Colonic mucosa (tissue), 4 donors: ENCODE measurements at regions of chr16 and their contacts with region 1.

Region 1: GRCh38 chr16:87278191-87279095 is 38.7 kb downstream of the C16orf95 start:
- DNase-seq: peak; percentile 77
- H3K4me3 ChIP-seq: no peak overlapping the region
- H3K27ac ChIP-seq: no peak overlapping the region
- H3K4me1 ChIP-seq: no peaks in the 10 kb centered on the region
- H3K27me3 ChIP-seq: no peaks in the 10 kb centered on the region
- CTCF ChIP-seq: peak; percentile 81

Region 2: GRCh38 chr16:87062569-87063442 is 215.6 kb before region 1 on chr16:
- intact Hi-C with region 1: loop called (anchors 10 kb)
- DNase-seq: peak; percentile 61
- H3K4me3 ChIP-seq: no peak overlapping the region
- H3K27ac ChIP-seq: no peak overlapping the region
- H3K4me1 ChIP-seq: no peaks in the 10 kb centered on the region
- H3K27me3 ChIP-seq: no peaks in the 10 kb centered on the region
- CTCF ChIP-seq: peak; percentile 72

Region 3: DNA sequence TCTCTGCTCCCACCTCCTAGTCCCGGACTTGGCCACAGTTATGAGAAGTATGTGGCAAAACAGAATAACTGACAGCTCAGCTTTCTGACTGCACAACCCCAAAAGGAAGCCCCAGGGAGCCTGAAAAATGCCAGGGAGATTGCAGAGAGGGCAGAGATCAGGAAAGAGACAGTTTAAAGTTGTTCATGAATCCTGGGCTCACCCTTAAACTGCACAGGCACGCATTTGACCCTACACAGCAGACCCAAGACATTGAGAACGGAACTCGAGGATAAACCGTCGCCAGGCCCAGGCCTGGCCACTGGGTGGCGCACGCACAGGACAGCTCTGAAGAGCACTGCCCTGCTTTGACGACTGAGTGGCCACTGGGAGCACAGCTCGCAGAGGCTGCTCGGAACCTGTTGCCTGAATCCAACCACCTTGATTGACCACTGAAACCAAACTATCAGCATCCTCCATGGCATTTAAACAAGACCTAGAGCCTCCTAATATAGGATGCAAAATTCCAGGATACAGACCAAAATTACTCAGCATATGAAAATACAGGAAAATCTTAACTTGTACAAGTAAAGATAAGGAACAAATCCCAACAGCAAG is 75.3 kb before region 1 on chr16:
- intact Hi-C with region 1: loop called (anchors 2 kb)
- DNase-seq: peak; percentile 67
- H3K4me3 ChIP-seq: no peak overlapping the region
- H3K27ac ChIP-seq: no peak overlapping the region
- H3K4me1 ChIP-seq: no peaks in the 10 kb centered on the region
- H3K27me3 ChIP-seq: no peaks in the 10 kb centered on the region
- CTCF ChIP-seq: peak; percentile 70

Region 4: DNA sequence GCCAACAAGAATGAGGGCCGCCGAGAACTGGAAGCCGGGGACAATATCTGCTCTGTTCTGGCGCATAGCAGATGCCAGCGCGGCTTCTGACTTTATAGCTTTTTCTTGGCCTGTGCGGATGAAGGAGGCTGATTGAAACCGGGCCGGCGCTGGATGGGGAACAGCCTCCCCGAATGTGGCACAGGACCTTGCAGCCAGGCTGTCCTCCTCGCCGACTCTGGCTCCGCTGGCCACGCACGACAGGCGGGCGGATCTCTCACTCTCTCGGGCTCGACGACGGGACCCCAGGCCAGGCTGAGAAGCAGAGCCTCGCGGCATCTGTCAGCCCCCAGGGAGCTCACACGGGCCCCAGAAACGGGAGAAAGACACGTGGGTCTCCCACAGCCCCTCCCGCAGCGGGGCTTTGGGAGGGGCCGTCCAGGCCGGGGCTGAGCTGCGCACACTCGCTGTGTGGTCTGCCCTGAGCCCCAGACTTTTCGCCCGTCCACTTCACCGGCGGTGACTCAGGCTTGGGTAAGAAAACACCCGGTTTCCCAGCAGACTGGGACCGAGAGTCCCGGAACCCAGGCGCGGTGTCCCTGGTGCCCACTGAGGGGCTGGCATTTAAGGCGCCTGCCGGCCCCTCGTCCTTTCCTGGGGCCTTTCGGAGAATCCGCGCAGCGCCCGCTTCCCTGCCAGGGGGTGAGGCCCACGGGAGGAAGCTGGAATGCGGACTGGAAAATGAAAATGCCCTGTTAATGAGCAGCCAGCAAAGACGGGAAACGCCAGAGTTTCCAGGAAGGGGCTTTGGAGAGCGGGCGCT is 61.8 kb before region 1 on chr16:
- intact Hi-C with region 1: no loop called
- DNase-seq: no peak
- H3K4me3 ChIP-seq: no peak overlapping the region
- H3K27ac ChIP-seq: no peak overlapping the region
- H3K4me1 ChIP-seq: no peaks in the 10 kb centered on the region
- H3K27me3 ChIP-seq: no peaks in the 10 kb centered on the region
- CTCF ChIP-seq: no peak